CD4-positive, alpha-beta T cell (primary cell): ENCODE measurements at regions of chr16 and their contacts with region 1.

Region 1: DNA sequence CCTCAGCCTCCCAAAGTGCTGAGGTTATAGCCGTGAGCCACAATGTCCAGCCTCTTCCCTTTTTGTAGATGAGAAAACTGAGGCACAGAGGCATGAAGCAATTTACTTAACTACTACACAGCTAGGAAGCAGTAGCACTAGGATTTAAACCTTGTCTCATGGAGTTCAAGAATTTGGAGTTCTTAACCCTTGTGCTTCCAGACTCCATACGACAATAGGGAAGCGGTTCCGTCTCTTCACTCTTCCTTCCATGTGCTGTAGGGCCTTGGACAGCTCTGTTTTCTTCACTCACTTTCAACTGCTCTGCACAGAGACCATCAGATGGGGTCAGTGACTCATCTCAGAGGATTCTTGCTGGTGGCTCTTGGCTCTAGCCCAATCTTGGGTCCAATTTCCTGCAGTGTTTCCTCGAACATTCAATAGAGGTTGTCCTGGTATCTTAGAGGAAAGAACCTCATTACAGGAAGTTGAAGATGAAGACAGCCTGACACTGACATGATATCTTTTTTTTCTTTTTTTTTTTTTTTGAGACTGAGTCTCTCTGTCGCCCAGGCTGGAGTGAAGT is 19.3 kb downstream of the ITGAL start:
- DNase-seq: peak in 6 of 14 experiments; percentile 28 to 65 (median 46)
- ATAC-seq: peak; percentile 62
- H3K4me3 ChIP-seq: no peak overlapping the region
- H3K4me3 Mint-ChIP-seq: no peak overlapping the region
- H3K27ac ChIP-seq: peak overlapping the region in 1 of 2 donors; percentile 29
- H3K27ac Mint-ChIP-seq: peak overlapping the region; percentile 68
- H3K4me1 ChIP-seq: peaks cover 27% of the 10 kb centered on the region
- H3K4me1 Mint-ChIP-seq: peaks cover 21% of the 10 kb centered on the region
- H3K27me3 ChIP-seq: no peaks in the 10 kb centered on the region
- H3K27me3 Mint-ChIP-seq: no peaks in the 10 kb centered on the region
- CTCF ChIP-seq: no peak

Region 2: DNA sequence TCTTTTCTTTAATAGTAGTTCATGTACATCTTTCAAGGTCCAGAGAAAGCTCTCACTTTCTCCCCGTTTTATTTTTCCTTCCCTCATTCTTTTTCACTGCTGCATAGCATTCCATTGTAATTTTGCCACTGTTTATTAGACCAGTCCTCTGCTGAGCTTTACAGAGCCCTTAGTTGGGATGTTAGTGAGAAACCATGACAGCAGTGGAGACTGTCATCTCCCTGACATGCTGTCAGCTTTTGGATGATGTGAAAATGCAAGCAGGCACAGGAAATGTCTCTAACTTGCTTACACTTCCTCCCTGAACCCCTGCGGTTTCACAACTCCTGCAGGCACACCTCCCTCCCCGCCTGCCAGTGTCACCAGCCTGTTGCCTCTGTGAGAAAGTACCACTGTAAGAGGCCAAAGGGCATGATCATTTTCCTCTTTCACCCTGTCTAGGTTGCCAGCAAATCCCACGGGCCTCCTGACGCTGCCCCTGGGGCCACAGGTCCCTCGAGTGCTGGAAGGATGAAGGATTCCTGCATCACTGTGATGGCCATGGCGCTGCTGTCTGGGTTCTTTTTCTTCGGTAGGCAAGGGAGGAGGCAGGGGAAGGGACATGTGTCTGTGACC is 19.4 kb before region 1 on chr16 and contains the start of gene ITGAL:
- CTCF ChIA-PET with region 1: interaction called, 3 read pairs
- POLR2A ChIA-PET with region 1: interaction called, 21 read pairs
- intact Hi-C with region 1: loop called in 1 of 2 experiments (anchors 2 kb)
- DNase-seq: peak; percentile 63 to 96 (median 80)
- ATAC-seq: peak; percentile 83
- H3K4me3 ChIP-seq: peak within 1 kb of the TSS; percentile 83
- H3K4me3 Mint-ChIP-seq: peak within 1 kb of the TSS; percentile 96
- H3K27ac ChIP-seq: peak within 1 kb of the TSS; percentile 75 to 94
- H3K27ac Mint-ChIP-seq: peak within 1 kb of the TSS; percentile 90
- H3K4me1 ChIP-seq: peaks cover 81% of the 10 kb centered on the region
- H3K4me1 Mint-ChIP-seq: peaks cover 70% of the 10 kb centered on the region
- H3K27me3 ChIP-seq: no peaks in the 10 kb centered on the region
- H3K27me3 Mint-ChIP-seq: no peaks in the 10 kb centered on the region
- CTCF ChIP-seq: no peak
- total RNA-seq, gene ITGAL: 186 to 187 TPM

Region 3: GRCh38 chr16:30526823-30527635 is 35.2 kb after region 1 on chr16:
- CTCF ChIA-PET with region 1: interaction called, 4 read pairs
- POLR2A ChIA-PET with region 1: no interaction called
- intact Hi-C with region 1: loop called in 1 of 2 experiments (anchors 5 kb)
- DNase-seq: peak; percentile 57 to 95 (median 86)
- ATAC-seq: peak; percentile 71
- H3K4me3 ChIP-seq: peak overlapping the region; percentile 83
- H3K4me3 Mint-ChIP-seq: peak overlapping the region; percentile 88
- H3K27ac ChIP-seq: peak overlapping the region; percentile 76 to 81
- H3K27ac Mint-ChIP-seq: peak overlapping the region; percentile 81
- H3K4me1 ChIP-seq: peaks cover 49% of the 10 kb centered on the region
- H3K4me1 Mint-ChIP-seq: peaks cover 26% of the 10 kb centered on the region
- H3K27me3 ChIP-seq: no peaks in the 10 kb centered on the region
- H3K27me3 Mint-ChIP-seq: no peaks in the 10 kb centered on the region
- CTCF ChIP-seq: peak; percentile 18